Breast epithelium (tissue), 4 donors: ENCODE measurements at regions of chr12 and their contacts with region 1.

Region 1: DNA sequence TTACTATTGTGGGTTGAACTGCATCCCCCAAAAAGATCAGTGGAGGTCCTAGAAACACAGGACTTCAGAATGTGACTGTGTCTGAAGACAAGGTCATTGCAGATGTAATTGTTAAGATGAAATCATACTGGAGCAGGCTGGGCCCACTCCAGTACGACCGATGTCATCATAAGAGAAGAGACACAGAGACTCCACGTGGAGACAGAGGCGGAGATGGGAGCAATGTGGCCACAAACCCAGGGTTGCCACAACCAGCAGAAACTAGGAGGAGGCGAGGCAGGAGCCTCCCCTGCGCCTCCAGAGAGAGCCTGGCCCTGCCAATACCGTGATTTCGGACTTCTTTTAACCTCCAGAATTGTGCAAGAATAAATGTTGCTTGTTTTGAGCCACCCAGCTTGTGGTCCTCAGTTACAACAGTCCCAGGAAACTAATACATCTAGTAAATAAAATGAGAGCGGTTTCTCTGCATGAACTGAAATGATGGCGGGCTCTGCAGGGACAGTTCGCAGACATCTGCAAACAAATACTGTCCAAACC is 25.7 kb upstream of the FZD10 start:
- DNase-seq: no peak
- H3K4me3 ChIP-seq: no peak overlapping the region
- H3K27ac ChIP-seq: no peak overlapping the region
- H3K4me1 ChIP-seq: no peaks in the 10 kb centered on the region
- H3K27me3 ChIP-seq: no peaks in the 10 kb centered on the region
- CTCF ChIP-seq: no peak
- POLR2A ChIP-seq: no peak

Region 2: GRCh38 chr12:130104571-130105106 is 31.9 kb before region 1 on chr12:
- intact Hi-C with region 1: loop called (anchors 1 kb)
- DNase-seq: peak in 1 of 2 donors; percentile 39
- H3K4me3 ChIP-seq: peak overlapping the region in 2 of 3 donors; percentile 10 to 52
- H3K27ac ChIP-seq: peak overlapping the region; percentile 60 to 67
- H3K4me1 ChIP-seq: peaks cover 0 to 10% of the 10 kb centered on the region in 2 donors
- H3K27me3 ChIP-seq: no peaks in the 10 kb centered on the region
- CTCF ChIP-seq: no peak
- POLR2A ChIP-seq: no peak

Region 3: GRCh38 chr12:131137836-131138637 is 1001.5 kb after region 1 on chr12:
- intact Hi-C with region 1: no loop called
- DNase-seq: no peak
- H3K4me3 ChIP-seq: peak overlapping the region in 1 of 3 donors; percentile 40
- H3K27ac ChIP-seq: peak overlapping the region in 1 of 2 donors; percentile 32
- H3K4me1 ChIP-seq: no peaks in the 10 kb centered on the region
- H3K27me3 ChIP-seq: peaks cover 0 to 8% of the 10 kb centered on the region in 2 donors
- CTCF ChIP-seq: no peak
- POLR2A ChIP-seq: no peak